ENCODE measurements at regions of chr5 and their contacts with region 1.

Region 1: GRCh38 chr5:42825422-42826148 is 13.9 kb upstream of the SELENOP start:
- DNase-seq: peak; percentile 41
- ATAC-seq: peak; percentile 20; the same call in 2 of the 3 replicates
- H3K4me3 ChIP-seq: peak overlapping the region; percentile 37 to 63 (median 56); a peak in 5 of 6 replicates
- H3K27ac ChIP-seq: peak overlapping the region; percentile 80
- H3K4me1 ChIP-seq: peaks cover 92% of the 10 kb centered on the region
- H3K27me3 ChIP-seq: no peaks in the 10 kb centered on the region
- CTCF ChIP-seq: no peak
- EP300 ChIP-seq: no peak
- POLR2A ChIP-seq: no peak; a peak in 1 of 4 replicates
- RAD21 ChIP-seq: no peak

Region 2: GRCh38 chr5:42612750-42613366 is 212.7 kb before region 1 on chr5:
- CTCF ChIA-PET with region 1: no interaction called
- POLR2A ChIA-PET with region 1: no interaction called
- in situ Hi-C with region 1: no loop called
- intact Hi-C with region 1: no loop called
- DNase-seq: no peak
- ATAC-seq: no peak
- H3K4me3 ChIP-seq: no peak overlapping the region
- H3K27ac ChIP-seq: no peak overlapping the region
- H3K4me1 ChIP-seq: no peaks in the 10 kb centered on the region
- H3K27me3 ChIP-seq: no peaks in the 10 kb centered on the region
- CTCF ChIP-seq: no peak
- EP300 ChIP-seq: no peak
- POLR2A ChIP-seq: no peak
- RAD21 ChIP-seq: no peak

Region 3: GRCh38 chr5:42840269-42840668 is 14.7 kb after region 1 on chr5:
- CTCF ChIA-PET with region 1: no interaction called
- POLR2A ChIA-PET with region 1: interaction called, 10 read pairs
- in situ Hi-C with region 1: no loop called
- intact Hi-C with region 1: loop called (anchors 2 kb)
- DNase-seq: peak; percentile 38
- ATAC-seq: peak; percentile 60
- H3K4me3 ChIP-seq: peak overlapping the region in 1 of 3 experiments; percentile 17; a peak in 1 of 6 replicates
- H3K27ac ChIP-seq: peak overlapping the region; percentile 19
- H3K4me1 ChIP-seq: peaks cover 57% of the 10 kb centered on the region
- H3K27me3 ChIP-seq: no peaks in the 10 kb centered on the region
- CTCF ChIP-seq: no peak
- EP300 ChIP-seq: no peak
- POLR2A ChIP-seq: no peak
- RAD21 ChIP-seq: no peak

Region 4: DNA sequence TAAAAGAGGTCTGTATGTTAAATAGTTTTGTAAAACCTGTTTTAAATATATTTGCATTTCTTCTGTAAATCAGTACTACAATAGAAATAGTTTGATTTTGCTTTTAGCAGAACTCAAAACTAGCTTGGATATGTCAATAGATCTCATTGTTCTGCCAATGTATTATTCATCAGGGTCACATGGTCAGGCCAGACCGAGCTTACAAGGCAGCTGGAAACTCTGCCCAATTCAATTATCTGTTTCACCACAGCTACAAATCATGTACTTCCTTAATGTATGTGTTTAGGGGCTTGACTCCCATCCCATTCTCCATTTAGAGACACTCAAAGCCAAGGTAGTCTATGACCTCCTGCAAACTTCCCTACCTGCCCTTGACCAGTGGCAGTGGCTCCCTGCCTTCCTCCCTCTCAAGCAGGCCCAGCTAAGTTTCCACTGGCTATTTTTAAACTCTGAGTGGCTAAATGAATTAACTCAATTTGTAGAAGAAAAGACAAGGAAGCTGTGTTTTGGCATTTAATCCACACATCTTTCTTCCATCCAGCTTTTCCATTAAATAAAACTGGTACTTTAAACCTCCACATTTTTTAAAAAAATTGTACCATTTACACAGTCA is 32.6 kb after region 1 on chr5:
- CTCF ChIA-PET with region 1: no interaction called
- POLR2A ChIA-PET with region 1: interaction called, 15 read pairs
- in situ Hi-C with region 1: no loop called
- intact Hi-C with region 1: no loop called
- DNase-seq: no peak
- ATAC-seq: peak; percentile 60
- H3K4me3 ChIP-seq: peak overlapping the region in 2 of 3 experiments; percentile 22 to 51; a peak in 3 of 6 replicates
- H3K27ac ChIP-seq: peak overlapping the region; percentile 69
- H3K4me1 ChIP-seq: peaks cover 89% of the 10 kb centered on the region
- H3K27me3 ChIP-seq: no peaks in the 10 kb centered on the region
- CTCF ChIP-seq: no peak
- EP300 ChIP-seq: no peak
- POLR2A ChIP-seq: no peak
- RAD21 ChIP-seq: no peak

Region 5: DNA sequence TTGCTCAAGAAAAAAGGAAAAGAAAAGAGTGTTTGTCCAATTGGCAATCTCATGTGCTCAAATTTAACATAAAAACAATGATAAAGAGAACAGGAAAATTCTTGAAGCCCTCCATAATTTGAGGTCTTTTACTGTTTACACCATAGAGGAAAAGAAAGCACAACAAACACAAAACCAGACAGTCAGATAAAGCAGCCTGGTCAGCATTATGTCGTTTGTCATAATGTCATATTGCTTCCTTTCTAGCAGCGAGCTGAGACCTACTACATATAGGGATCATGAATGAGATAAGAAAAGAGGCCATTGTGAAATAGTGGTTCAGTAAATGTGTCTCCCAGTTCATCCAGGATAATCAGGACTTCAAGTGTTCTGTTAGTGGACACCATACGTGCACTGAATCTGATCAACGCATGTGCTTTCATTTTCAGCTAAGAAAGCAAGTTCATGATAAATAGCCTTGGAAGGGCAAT is 50.8 kb after region 1 on chr5:
- CTCF ChIA-PET with region 1: no interaction called
- POLR2A ChIA-PET with region 1: interaction called, 25 read pairs
- in situ Hi-C with region 1: loop called (anchors 5 kb)
- intact Hi-C with region 1: no loop called
- DNase-seq: no peak
- ATAC-seq: no peak
- H3K4me3 ChIP-seq: peak overlapping the region in 2 of 3 experiments; percentile 54 to 60; a peak in 3 of 6 replicates
- H3K27ac ChIP-seq: peak overlapping the region; percentile 99
- H3K4me1 ChIP-seq: peaks cover 97% of the 10 kb centered on the region
- H3K27me3 ChIP-seq: no peaks in the 10 kb centered on the region
- CTCF ChIP-seq: no peak
- EP300 ChIP-seq: no peak
- POLR2A ChIP-seq: no peak
- RAD21 ChIP-seq: no peak

Region 6: DNA sequence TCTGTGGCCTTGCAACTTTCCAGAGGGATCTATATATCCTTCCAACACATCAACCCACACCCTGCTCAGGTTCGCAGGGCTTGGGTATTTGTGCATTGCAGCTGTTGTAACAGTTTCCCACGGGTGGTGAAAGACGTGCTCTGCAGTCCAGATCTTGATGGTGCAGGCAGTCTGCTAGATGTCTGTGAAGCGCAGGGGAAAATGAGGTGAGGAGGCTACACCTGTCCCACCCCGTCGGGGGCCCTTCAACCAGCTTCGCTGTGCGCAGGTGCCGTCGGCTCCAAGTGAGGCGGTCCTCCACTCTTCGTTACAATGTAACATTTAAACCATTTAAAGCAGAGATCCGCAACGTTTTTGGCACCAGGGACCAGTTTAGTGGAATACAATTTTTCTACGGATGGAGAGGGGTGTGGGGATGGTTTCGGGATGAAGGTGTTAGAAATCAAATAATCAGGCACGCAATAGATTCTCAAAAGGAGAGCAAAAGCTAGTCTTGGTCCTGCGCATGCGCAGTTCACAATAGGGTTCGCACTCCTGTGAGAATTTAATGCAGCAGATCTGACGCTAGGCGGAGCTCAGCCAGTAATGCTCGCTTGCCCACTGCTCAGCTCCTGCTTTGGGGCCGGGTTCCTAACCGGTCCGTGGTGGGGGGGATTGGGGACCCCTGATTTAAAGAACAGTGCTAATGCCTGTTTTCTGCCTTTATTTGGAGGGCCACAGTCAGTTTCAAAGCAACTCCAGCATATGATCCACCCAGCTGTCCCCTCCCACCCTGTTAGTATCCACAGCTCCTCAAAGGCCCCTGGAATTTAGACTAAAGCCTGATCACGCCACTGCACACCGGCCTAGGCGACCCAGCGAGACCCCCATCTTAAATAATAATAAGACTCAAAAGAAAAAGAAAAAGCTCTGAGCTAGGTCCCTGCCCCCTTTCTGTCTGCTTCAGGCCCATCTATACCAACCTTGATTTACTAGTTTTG is 83.2 kb after region 1 on chr5:
- CTCF ChIA-PET with region 1: no interaction called
- POLR2A ChIA-PET with region 1: no interaction called
- in situ Hi-C with region 1: no loop called
- intact Hi-C with region 1: no loop called
- DNase-seq: peak; percentile 81
- ATAC-seq: peak; percentile 92
- H3K4me3 ChIP-seq: peak overlapping the region; percentile 25 to 67 (median 61)
- H3K27ac ChIP-seq: no peak overlapping the region
- H3K4me1 ChIP-seq: peaks cover 17% of the 10 kb centered on the region
- H3K27me3 ChIP-seq: no peaks in the 10 kb centered on the region
- CTCF ChIP-seq: peak; percentile 92
- EP300 ChIP-seq: no peak
- POLR2A ChIP-seq: no peak
- RAD21 ChIP-seq: peak; percentile 65; the same call in 1 of the 2 replicates